ENCODE measurements at regions of chr11 and their contacts with region 1.

Region 1: GRCh38 chr11:43944761-43945311 is 2.4 kb downstream of the C11orf96 start:
- DNase-seq: peak; percentile 92
- ATAC-seq: peak; percentile 69
- H3K4me3 ChIP-seq: peak overlapping the region; percentile 64
- H3K27ac ChIP-seq: peak overlapping the region; percentile 86
- H3K4me1 ChIP-seq: peaks cover 20% of the 10 kb centered on the region
- H3K27me3 ChIP-seq: peaks cover 20% of the 10 kb centered on the region
- CTCF ChIP-seq: peak; percentile 85

Region 2: GRCh38 chr11:43880640-43881159 is 64.1 kb before region 1 on chr11 and contains the start of gene ALKBH3:
- intact Hi-C with region 1: no loop called
- DNase-seq: peak; percentile 95
- ATAC-seq: peak; percentile 100
- H3K4me3 ChIP-seq: peak within 1 kb of the TSS; percentile 96
- H3K27ac ChIP-seq: peak within 1 kb of the TSS; percentile 81
- H3K4me1 ChIP-seq: peaks cover 17% of the 10 kb centered on the region
- H3K27me3 ChIP-seq: peaks cover 32% of the 10 kb centered on the region
- CTCF ChIP-seq: no peak
- total RNA-seq, gene ALKBH3: 27.7 TPM

Region 3: GRCh38 chr11:44036811-44037657 is 92.2 kb after region 1 on chr11:
- intact Hi-C with region 1: loop called (anchors 10 kb)
- DNase-seq: peak; percentile 86
- ATAC-seq: peak; percentile 92
- H3K4me3 ChIP-seq: no peak overlapping the region
- H3K27ac ChIP-seq: no peak overlapping the region
- H3K4me1 ChIP-seq: peaks cover 10% of the 10 kb centered on the region
- H3K27me3 ChIP-seq: no peaks in the 10 kb centered on the region
- CTCF ChIP-seq: peak; percentile 79

Measured in upper lobe of right lung (tissue), 1 donor.